OCI-LY7 (cell line): ENCODE measurements at regions of chr15 and their contacts with region 1.

Region 1: GRCh38 chr15:85380217-85380811 is at the start of gene AKAP13:
- DNase-seq: peak; percentile 100
- H3K4me3 ChIP-seq: peak within 1 kb of the TSS; percentile 86
- H3K27ac ChIP-seq: peak within 1 kb of the TSS; percentile 88
- H3K4me1 ChIP-seq: peaks cover 32% of the 10 kb centered on the region
- CTCF ChIP-seq: no peak
- total RNA-seq, gene AKAP13: 124 and 140 TPM in 2 replicates

Region 2: GRCh38 chr15:85367741-85368140 is 12.6 kb before region 1 on chr15:
- CTCF ChIA-PET with region 1: no interaction called
- POLR2A ChIA-PET with region 1: interaction called, 30 read pairs
- intact Hi-C with region 1: no loop called
- DNase-seq: no peak
- H3K4me3 ChIP-seq: no peak overlapping the region
- H3K27ac ChIP-seq: no peak overlapping the region
- H3K4me1 ChIP-seq: peaks cover 3% of the 10 kb centered on the region
- CTCF ChIP-seq: no peak

Region 3: DNA sequence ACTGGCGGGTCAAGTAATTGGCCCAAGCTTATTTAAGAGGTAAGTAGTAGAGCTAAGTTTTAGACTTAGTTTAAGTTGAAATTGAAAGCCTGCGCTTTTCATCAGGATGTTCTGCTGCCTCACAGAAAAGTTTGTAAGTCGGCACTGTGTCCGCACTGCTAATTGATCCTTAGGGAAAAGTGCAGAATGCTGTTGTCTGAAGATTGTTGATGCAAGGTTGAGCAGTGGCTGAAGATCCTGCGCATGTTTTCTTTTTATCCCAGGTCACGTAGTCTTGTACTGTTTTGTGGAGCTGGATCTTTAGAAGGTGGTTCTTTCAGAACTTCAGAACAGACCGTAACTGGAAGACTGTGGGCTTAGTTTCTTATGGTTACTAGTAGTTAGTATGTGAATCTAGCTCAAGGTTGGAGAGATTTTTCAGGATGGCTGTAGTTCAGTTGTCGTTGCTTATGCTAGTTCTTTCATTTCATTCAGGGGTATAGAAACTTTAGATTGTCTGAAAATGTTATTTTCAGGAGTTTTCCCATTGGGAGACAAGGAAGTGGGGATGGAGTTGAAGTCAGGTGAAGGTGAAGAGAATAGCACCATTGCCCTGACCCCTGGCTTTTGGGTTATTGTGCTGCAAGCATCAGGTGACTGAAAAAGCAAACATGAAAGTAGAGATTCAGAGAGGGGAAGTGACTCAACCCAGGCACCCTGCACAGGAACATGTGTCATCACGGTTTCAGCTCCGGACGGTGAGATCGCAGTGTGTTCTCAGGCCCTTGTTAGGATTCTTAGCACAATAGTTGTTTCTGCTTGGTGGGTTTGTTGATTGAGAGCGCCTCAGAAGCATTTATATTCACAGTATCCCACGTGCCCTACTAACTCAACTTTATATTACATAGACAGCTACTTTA is 32.9 kb after region 1 on chr15:
- CTCF ChIA-PET with region 1: no interaction called
- POLR2A ChIA-PET with region 1: interaction called, 335 read pairs
- intact Hi-C with region 1: loop called (anchors 1 kb)
- DNase-seq: peak; percentile 90
- H3K4me3 ChIP-seq: peak overlapping the region; percentile 49
- H3K27ac ChIP-seq: peak overlapping the region; percentile 71
- H3K4me1 ChIP-seq: peaks cover 72% of the 10 kb centered on the region
- CTCF ChIP-seq: peak; percentile 54; the same call in 1 of the 2 replicates

Region 4: GRCh38 chr15:85456798-85457197 is 76.5 kb after region 1 on chr15:
- CTCF ChIA-PET with region 1: no interaction called
- POLR2A ChIA-PET with region 1: interaction called, 3 read pairs
- intact Hi-C with region 1: loop called (anchors 2 kb)
- DNase-seq: no peak
- H3K4me3 ChIP-seq: peak overlapping the region; percentile 28
- H3K27ac ChIP-seq: peak overlapping the region; percentile 42
- H3K4me1 ChIP-seq: peaks cover 98% of the 10 kb centered on the region
- CTCF ChIP-seq: no peak

Region 5: DNA sequence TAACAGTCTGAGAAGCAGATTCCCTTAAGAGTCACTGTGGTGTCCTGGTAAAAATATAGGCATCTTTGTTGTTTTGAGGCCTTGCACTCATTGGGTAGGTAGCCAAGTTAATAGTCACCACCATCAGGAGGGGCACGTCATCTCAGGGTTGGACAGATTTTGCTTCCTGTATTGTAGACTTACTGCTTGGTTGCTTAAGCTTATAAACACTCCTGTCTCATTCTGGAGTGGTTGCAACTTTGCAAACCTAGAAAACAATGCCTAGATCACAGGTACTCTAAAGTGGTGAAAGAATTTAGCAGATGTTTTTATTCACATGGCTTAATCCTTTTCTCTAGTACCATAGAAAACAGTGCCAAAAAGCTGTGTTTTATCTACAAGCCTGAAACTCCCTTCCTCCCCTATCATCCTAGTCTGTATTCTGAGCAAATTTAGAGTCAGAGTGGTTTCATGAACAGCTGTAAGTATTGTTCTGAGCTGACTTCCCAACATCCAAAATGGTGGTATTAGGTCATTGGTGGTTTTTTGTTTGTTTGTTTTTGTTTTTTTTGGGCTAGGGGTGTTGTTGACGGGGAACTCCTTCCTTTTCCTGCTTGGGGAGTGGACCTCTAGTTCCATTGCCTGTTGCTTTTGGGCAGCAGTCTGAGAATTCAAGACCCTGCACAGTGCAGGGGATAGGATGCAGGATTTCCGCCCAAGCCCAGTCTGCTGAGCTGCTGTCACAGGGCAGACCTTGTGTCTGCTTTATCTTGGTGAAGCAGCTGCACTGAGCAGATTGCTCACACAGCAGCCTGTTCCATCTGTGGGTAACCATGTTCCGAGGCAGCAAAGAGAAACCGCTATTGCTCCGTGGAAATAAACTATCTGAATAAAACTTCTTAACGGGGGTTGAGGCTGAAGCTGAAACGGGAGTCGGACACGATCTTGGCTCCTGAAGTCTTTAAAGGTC is 202.1 kb after region 1 on chr15:
- CTCF ChIA-PET with region 1: no interaction called
- POLR2A ChIA-PET with region 1: no interaction called
- intact Hi-C with region 1: loop called (anchors 5 kb)
- DNase-seq: peak; percentile 78
- H3K4me3 ChIP-seq: peak overlapping the region; percentile 59
- H3K27ac ChIP-seq: peak overlapping the region; percentile 61
- H3K4me1 ChIP-seq: peaks cover 50% of the 10 kb centered on the region
- CTCF ChIP-seq: no peak